A673 (cell line): ENCODE measurements at regions of chr9 and their contacts with region 1.

Region 1: DNA sequence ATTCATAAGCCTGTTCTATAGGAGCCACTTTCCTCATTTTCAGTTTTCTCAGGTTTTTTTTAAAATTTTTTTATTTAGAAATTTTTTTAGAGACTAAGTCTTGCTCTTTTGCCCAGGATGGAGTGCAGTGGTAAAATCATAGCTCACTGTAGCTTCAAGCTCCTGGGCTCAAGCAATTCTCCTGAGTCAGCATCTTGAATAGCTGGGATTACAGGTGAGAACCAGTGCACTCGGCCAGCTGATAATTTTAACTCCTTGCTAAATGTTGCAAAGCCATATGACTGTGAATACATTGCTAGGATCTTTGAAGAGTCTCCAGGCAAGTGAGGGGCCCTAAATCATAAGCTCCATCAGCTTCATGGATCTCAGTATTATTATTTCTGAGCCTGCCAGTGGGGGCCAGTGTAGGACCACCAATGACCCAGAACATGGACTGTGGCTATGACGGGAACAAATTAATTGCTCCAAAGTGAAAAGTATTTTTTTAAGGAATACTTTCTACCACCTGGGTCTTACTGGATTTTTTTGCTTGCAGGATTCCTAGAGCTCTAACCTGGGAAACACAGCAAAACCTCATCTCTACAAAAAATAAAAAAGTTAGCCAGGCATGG is 5.7 kb upstream of the GAPVD1 start:
- DNase-seq: peak; percentile 43
- H3K4me3 ChIP-seq: no peak overlapping the region
- H3K27ac ChIP-seq: no peak overlapping the region
- H3K4me1 ChIP-seq: no peaks in the 10 kb centered on the region
- H3K27me3 ChIP-seq: no peaks in the 10 kb centered on the region
- CTCF ChIP-seq: peak; percentile 53

Region 2: GRCh38 chr9:125172031-125172755 is 83.7 kb before region 1 on chr9:
- CTCF ChIA-PET with region 1: interaction called, 14 read pairs
- POLR2A ChIA-PET with region 1: no interaction called
- intact Hi-C with region 1: no loop called
- DNase-seq: peak; percentile 78
- H3K4me3 ChIP-seq: no peak overlapping the region
- H3K27ac ChIP-seq: peak overlapping the region; percentile 46
- H3K4me1 ChIP-seq: peaks cover 36% of the 10 kb centered on the region
- H3K27me3 ChIP-seq: no peaks in the 10 kb centered on the region
- CTCF ChIP-seq: no peak

Region 3: GRCh38 chr9:125374443-125375309 is 118.8 kb after region 1 on chr9:
- CTCF ChIA-PET with region 1: no interaction called
- POLR2A ChIA-PET with region 1: no interaction called
- intact Hi-C with region 1: loop called (anchors 5 kb)
- DNase-seq: peak; percentile 89
- H3K4me3 ChIP-seq: peak overlapping the region; percentile 24
- H3K27ac ChIP-seq: no peak overlapping the region
- H3K4me1 ChIP-seq: peaks cover 10% of the 10 kb centered on the region
- H3K27me3 ChIP-seq: no peaks in the 10 kb centered on the region
- CTCF ChIP-seq: peak; percentile 79